Psoas muscle (tissue), 8 donors: ENCODE measurements at regions of chr1 and their contacts with region 1.

Region 1: DNA sequence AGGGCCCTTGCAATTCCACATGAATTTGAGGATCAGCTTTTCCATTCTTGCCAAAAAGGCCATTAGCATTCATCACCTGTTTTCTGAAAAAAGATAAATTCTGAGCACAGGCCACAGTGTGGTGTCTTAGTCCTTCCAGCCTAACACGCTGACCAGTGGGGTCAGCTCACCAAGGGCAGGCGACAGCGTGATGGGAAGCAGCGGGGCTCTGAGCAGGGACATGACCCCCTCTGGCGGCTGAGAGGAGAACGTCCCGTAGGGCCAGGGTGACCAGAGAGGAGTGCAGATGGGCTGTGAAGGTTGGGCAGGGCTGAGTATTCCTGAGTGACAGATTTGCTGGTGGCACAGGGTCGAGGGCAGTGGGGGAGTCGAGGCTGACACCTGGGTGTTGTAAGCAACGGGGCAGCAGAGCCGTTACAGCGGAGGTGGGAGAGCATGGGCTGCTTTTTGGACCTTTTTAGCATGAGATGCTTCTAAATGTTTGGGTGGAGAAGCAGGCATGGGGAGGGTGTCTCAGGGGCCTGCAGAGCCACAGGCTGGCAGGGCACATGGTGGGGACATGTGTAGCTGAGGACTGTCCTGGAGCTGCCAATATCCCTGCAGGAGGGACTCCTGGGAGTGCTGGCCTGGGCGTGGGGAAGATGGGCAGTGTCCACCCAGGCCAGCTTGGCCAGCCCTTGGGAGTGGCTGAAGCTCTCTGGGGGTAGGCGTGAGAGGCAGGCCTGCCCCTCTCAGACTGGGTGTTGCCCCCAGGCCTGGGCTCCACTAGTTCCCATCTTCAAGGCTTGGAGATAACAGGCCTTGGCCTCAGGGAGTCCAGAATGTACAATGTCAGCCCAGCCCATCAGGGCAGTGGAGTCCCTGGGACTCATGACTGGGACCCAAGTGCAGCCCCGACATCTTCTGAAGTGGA is 8.6 kb upstream of the CALML6 start:
- DNase-seq: peak; percentile 87 to 93
- ATAC-seq: peak; percentile 70 to 74 (median 72)
- H3K4me3 ChIP-seq: no peak overlapping the region
- H3K27ac ChIP-seq: peak overlapping the region; percentile 32
- H3K4me1 ChIP-seq: peaks cover 32% of the 10 kb centered on the region
- H3K27me3 ChIP-seq: no peaks in the 10 kb centered on the region
- CTCF ChIP-seq: peak; percentile 89

Region 2: DNA sequence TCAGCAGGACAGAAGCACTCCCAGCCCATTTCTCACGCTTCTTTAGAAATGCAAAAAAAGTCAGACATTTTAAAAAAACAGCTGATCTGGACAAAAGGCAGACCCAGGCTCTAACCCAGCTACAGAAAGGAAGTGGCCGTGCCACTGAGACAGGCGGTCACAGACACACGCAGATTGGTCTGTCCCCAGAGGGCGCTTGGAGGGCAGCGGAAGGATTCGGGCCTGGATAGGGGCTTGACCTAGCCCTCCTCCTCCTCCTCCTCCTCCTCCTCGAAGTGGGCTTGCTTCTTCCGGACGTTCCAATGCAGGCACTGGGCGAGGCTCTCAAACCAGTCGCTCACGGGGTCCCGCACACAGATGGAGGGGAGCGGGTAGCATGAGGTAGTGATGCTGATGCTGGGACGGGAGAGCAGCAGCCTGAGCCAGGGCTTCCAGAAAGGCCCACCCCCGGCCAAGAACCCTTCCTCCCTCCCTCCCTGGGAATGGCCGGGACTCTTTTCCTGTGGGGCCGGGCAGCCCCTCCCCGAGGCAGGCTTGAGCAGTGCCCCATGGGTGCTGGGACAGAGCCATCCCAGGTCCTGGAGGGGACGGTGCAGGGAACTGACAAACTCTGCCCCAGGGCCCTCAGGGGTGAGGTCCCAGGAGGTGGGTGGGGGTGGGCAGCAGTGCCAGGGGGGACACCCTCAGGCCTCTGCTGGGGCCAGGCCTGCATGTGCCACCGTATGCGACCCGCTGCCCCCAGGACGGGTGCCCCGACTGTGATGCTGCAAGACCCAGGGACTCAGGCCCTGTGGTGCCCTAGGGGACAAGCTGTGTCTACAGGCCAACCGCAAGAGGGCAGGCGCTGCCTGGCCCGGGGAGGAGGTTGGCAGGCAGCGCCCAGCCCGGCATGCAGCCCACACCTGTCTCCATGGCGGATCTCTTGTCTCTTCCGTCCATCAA is 153.5 kb before region 1 on chr1:
- intact Hi-C with region 1: loop called (anchors 1 to 5 kb)
- DNase-seq: peak; percentile 56 to 86
- ATAC-seq: peak; percentile 88 to 95 (median 92)
- H3K4me3 ChIP-seq: no peak overlapping the region
- H3K27ac ChIP-seq: no peak overlapping the region
- H3K4me1 ChIP-seq: peaks cover 5% of the 10 kb centered on the region
- H3K27me3 ChIP-seq: no peaks in the 10 kb centered on the region
- CTCF ChIP-seq: peak; percentile 72

Region 3: DNA sequence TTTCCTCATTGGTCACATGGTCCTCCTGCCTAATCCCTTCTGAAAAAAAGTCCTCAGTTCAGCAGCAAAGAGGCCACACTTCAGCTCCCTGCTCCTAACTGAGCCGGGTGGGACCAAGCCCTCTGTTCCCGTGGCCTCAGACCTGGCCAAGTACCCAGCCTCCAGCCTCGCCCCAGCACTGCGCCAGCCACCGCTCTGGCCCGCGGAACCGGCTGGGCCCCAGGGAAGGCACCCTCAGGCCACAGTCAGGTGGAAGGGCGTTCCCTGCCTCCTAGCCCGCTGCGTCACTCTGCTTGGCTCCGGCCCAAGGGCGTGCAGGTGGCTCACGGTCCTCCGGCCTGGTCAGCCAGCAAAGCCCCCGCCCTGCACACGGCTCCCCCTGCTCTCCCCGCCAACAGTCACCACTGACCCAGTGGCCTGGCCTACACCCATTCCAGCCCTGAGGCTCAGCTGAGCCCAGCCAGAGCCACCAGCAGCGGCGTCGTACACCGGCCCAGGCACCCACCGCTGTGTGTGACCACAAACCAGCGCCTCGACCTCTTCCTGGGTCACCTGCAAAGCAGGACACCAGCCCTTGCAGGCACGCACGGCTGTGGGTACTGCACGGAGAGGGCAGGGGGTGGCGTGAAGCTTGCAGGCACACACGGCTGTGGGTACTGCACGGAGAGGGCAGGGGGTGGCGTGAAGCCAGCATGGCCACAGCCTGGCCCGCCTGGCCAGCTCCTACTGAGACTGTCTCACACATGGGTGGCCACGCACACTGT is 147.6 kb before region 1 on chr1:
- intact Hi-C with region 1: loop called in 1 of 2 experiments (anchors 5 kb)
- DNase-seq: peak; percentile 73 to 82
- ATAC-seq: peak; percentile 62 to 73 (median 71)
- H3K4me3 ChIP-seq: no peak overlapping the region
- H3K27ac ChIP-seq: peak overlapping the region; percentile 69
- H3K4me1 ChIP-seq: peaks cover 18% of the 10 kb centered on the region
- H3K27me3 ChIP-seq: no peaks in the 10 kb centered on the region
- CTCF ChIP-seq: no peak

Region 4: DNA sequence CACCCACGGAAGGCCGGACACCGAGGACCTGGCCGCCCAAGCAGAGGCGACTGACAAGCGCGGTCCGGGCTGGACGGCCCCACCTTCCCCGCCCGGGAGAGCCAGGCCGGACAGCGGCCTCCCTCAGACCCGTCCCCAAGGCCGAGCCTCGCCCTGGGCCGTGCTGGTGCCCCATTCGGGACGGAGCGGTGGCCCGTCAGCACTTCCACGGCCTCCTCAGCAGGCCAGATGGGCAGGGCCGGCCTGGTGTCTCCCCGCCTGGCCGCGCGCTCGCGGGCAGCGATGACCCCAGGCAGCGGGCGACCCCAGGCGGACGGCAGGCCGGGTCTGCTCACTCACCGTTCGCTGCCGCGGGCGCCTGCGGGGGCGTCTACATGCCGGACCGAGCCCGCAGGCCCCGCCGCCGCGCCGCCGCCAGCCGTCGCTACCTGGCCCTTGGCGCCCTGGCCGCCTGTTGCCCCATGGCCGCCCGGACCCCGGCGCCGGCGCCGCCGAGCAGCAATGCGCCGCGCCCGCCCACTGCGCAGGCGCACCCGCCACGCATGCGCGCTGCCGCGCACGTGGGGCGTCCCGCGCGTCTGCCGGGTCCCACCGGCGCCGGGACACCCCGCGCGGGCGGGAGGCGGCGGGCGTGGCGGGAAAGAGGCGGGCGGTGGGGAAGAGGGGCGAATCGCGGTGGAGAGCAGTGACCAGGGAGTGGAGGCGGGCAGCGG is 128.3 kb before region 1 on chr1 and contains the start of gene NADK:
- intact Hi-C with region 1: loop called in 1 of 2 experiments (anchors 2 kb)
- DNase-seq: peak; percentile 74 to 84
- ATAC-seq: peak; percentile 70 to 77 (median 75)
- H3K4me3 ChIP-seq: peak within 1 kb of the TSS; percentile 91
- H3K27ac ChIP-seq: peak within 1 kb of the TSS; percentile 94
- H3K4me1 ChIP-seq: peaks cover 43% of the 10 kb centered on the region
- H3K27me3 ChIP-seq: no peaks in the 10 kb centered on the region
- CTCF ChIP-seq: no peak
- total RNA-seq, gene NADK: 19.1 to 37.7 (median 28.7) TPM

Region 5: GRCh38 chr1:1858382-1859086 is 47.9 kb before region 1 on chr1:
- intact Hi-C with region 1: no loop called
- DNase-seq: peak; percentile 60 to 79
- ATAC-seq: peak; percentile 70 to 84 (median 76)
- H3K4me3 ChIP-seq: peak overlapping the region; percentile 39
- H3K27ac ChIP-seq: peak overlapping the region; percentile 66
- H3K4me1 ChIP-seq: peaks cover 72% of the 10 kb centered on the region
- H3K27me3 ChIP-seq: no peaks in the 10 kb centered on the region
- CTCF ChIP-seq: peak; percentile 36

Region 6: DNA sequence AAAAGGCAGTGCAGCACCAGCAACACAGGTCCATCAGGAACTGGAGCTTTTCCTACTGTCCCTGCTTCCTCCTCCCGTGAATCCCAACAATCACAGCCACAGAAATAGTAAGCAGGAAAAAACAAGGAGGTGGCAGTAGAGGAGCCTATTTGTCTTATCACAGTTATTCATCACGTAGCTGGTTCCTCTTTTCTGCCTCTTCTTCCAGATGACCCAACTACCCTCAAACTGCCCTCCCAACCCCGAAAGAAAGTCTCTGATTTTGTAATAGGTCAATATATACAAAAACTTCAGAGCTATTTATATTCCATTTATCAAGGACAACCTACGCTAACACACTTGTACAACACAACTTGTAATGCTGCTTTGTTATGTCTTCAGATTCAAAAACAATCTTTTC is 37.0 kb before region 1 on chr1:
- intact Hi-C with region 1: no loop called
- DNase-seq: no peak
- ATAC-seq: no peak
- H3K4me3 ChIP-seq: no peak overlapping the region
- H3K27ac ChIP-seq: no peak overlapping the region
- H3K4me1 ChIP-seq: peaks cover 46% of the 10 kb centered on the region
- H3K27me3 ChIP-seq: no peaks in the 10 kb centered on the region
- CTCF ChIP-seq: no peak

Region 7: GRCh38 chr1:1919304-1920056 is 13.0 kb after region 1 on chr1:
- intact Hi-C with region 1: no loop called
- DNase-seq: peak; percentile 99 to 100
- ATAC-seq: peak; percentile 83 to 90 (median 84)
- H3K4me3 ChIP-seq: peak overlapping the region; percentile 67
- H3K27ac ChIP-seq: peak overlapping the region; percentile 85
- H3K4me1 ChIP-seq: peaks cover 34% of the 10 kb centered on the region
- H3K27me3 ChIP-seq: no peaks in the 10 kb centered on the region
- CTCF ChIP-seq: no peak

Region 8: GRCh38 chr1:2214541-2215281 is 308.3 kb after region 1 on chr1:
- intact Hi-C with region 1: no loop called
- DNase-seq: peak; percentile 41 to 70
- ATAC-seq: no peak
- H3K4me3 ChIP-seq: peak overlapping the region; percentile 53
- H3K27ac ChIP-seq: peak overlapping the region; percentile 84
- H3K4me1 ChIP-seq: peaks cover 30% of the 10 kb centered on the region
- H3K27me3 ChIP-seq: no peaks in the 10 kb centered on the region
- CTCF ChIP-seq: no peak